Stomach (tissue), 19 donors: ENCODE measurements at regions of chr22 and their contacts with region 1.

Region 1: DNA sequence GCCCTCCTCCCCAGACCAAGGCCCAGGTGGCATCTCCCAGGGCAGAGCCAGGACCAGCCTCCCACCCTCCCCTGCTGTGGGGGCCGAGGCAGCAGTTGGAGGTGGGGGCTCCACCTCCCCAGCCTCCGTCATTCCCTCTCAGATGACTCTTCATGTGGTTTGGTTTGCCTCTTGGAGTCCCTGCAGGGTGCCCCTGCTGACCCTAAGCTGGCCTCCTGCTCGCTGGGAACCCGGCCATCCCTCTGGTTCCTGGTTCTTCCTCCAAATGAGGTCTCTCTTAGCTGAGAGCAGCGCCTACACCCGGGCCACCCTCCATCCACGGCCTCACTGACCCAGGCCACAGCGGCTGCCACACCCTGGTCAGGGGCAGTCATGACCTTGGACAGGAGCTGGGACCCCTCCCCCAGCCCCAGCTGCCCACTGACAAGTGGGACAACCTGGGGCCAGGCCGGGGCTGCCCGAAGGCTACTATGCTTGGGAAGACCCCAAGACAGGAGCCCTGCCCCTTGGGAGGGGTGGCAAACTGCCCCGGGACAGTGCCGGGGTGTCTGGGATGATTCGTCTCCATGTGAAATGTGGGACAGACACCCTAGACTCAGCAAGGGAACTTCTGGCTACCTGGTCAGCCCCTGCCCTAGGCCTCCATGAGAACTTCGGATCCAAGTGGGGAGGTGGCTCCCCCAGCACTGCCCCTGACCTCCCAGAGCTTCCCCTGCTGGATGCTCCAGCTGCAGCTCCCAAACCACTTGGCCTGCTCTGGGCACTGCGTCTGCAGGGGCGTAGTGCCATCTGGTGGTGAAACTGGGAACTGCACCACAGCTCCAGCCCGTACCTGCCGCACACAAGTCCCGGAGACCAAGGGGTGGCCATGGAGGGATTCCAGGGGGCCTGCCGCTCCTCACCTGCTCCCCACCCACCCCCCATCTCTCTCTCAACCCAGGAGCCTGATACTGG is 194.5 kb downstream of the IGLL1 start:
- DNase-seq: peak; percentile 91 to 95
- H3K4me3 ChIP-seq: no peak overlapping the region
- H3K27ac ChIP-seq: peak overlapping the region in 2 of 5 donors; percentile 43 to 63
- H3K4me1 ChIP-seq: peaks cover 9 to 22% (median 15%) of the 10 kb centered on the region in 4 donors
- H3K27me3 ChIP-seq: peaks cover 0 to 9% (median 0%) of the 10 kb centered on the region in 3 donors
- CTCF ChIP-seq: peak in 6 of 7 experiments; percentile 99 to 100 (median 99)
- EP300 ChIP-seq: no peak
- POLR2A ChIP-seq: no peak

Region 2: GRCh38 chr22:23313791-23314190 is 71.8 kb before region 1 on chr22:
- intact Hi-C with region 1: loop called (anchors 5 kb)
- DNase-seq: no peak
- H3K4me3 ChIP-seq: no peak overlapping the region
- H3K27ac ChIP-seq: no peak overlapping the region
- H3K4me1 ChIP-seq: peaks cover 0 to 5% (median 0%) of the 10 kb centered on the region in 4 donors
- H3K27me3 ChIP-seq: no peaks in the 10 kb centered on the region
- CTCF ChIP-seq: no peak
- EP300 ChIP-seq: no peak
- POLR2A ChIP-seq: no peak

Region 3: DNA sequence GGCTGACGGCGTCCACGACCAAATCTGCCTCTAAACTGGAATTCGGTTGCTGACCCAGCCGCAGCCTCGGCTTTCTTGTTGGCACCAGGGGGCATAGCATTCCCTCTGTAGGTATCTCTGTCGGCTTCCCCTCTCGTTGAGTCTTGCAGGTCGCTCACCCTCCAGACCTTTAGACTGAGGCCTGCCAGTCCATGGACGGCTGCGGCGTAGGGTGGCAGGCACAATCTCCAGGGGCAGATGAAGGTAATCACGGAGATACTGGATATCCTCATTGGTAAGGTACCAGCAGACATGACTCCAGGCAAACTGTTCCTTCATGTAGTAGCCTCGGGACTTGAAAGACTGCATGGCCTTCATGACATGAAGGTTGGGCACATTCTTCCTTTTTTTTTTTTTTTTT is 63.0 kb before region 1 on chr22:
- intact Hi-C with region 1: loop called (anchors 5 kb)
- DNase-seq: peak in 1 of 2 donors; percentile 9
- H3K4me3 ChIP-seq: no peak overlapping the region
- H3K27ac ChIP-seq: no peak overlapping the region
- H3K4me1 ChIP-seq: no peaks in the 10 kb centered on the region
- H3K27me3 ChIP-seq: no peaks in the 10 kb centered on the region
- CTCF ChIP-seq: no peak
- EP300 ChIP-seq: no peak
- POLR2A ChIP-seq: no peak

Region 4: GRCh38 chr22:23431337-23432072 is 45.9 kb after region 1 on chr22:
- intact Hi-C with region 1: no loop called
- DNase-seq: peak in 1 of 2 donors; percentile 45
- H3K4me3 ChIP-seq: no peak overlapping the region
- H3K27ac ChIP-seq: no peak overlapping the region
- H3K4me1 ChIP-seq: peaks cover 3 to 15% (median 10%) of the 10 kb centered on the region in 4 donors
- H3K27me3 ChIP-seq: peaks cover 0 to 5% (median 3%) of the 10 kb centered on the region in 3 donors
- CTCF ChIP-seq: no peak
- EP300 ChIP-seq: no peak
- POLR2A ChIP-seq: no peak

Region 5: GRCh38 chr22:23457355-23458068 is 71.9 kb after region 1 on chr22:
- intact Hi-C with region 1: no loop called
- DNase-seq: peak in 1 of 2 donors; percentile 28
- H3K4me3 ChIP-seq: no peak overlapping the region
- H3K27ac ChIP-seq: no peak overlapping the region
- H3K4me1 ChIP-seq: no peaks in the 10 kb centered on the region
- H3K27me3 ChIP-seq: peaks cover 0 to 49% (median under 1%) of the 10 kb centered on the region in 3 donors
- CTCF ChIP-seq: no peak
- EP300 ChIP-seq: no peak
- POLR2A ChIP-seq: no peak

Region 6: DNA sequence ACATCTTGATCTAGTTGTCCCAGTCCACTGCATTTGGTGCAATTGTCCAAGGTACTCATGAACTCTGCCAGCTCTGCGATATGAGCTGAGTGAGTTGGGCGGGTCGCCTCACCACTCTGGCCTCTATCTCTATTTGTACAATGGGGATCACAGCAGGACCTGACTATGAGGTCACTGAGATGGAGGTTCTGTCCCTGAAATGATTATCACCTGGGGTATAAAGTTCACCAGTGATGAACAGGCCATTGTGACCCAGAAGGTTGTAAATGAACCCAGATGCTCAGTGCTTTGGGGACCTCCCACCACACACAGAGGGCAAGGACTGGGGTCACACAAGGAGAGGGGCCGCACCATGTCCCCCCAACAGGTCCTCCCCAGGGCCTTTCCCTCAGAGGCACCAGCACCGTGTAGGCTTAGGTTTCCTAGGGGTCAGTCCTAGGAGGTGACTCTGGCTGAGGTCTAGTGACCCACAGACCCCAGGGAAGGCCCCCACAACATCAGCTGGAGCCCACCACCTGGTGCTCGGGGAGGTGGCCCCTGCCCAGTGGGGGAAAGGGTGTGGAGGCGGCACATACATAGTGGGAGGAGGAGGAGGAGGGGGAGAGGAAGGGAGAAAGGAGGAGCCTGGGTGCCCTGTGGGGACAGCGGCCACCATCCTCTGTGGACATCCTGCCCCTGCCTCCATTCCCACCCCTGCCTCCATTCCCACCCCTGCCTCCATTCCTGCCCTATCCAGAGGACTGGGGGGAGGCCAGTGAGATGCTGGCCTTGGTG is 219.6 kb after region 1 on chr22:
- intact Hi-C with region 1: no loop called
- DNase-seq: no peak
- H3K4me3 ChIP-seq: no peak overlapping the region
- H3K27ac ChIP-seq: no peak overlapping the region
- H3K4me1 ChIP-seq: no peaks in the 10 kb centered on the region
- H3K27me3 ChIP-seq: no peaks in the 10 kb centered on the region
- CTCF ChIP-seq: no peak
- EP300 ChIP-seq: no peak
- POLR2A ChIP-seq: no peak